ENCODE measurements at regions of chr12 and their contacts with region 1.

Region 1: GRCh38 chr12:81128930-81129554 is 51.2 kb downstream of the ACSS3 start:
- DNase-seq: no peak
- H3K4me3 Mint-ChIP-seq: no peak overlapping the region
- H3K27ac Mint-ChIP-seq: no peak overlapping the region
- H3K4me1 Mint-ChIP-seq: no peaks in the 10 kb centered on the region
- H3K27me3 Mint-ChIP-seq: no peaks in the 10 kb centered on the region

Region 2: GRCh38 chr12:80412369-80412953 is 716.6 kb before region 1 on chr12:
- intact Hi-C with region 1: loop called (anchors 5 kb)
- DNase-seq: no peak
- H3K4me3 Mint-ChIP-seq: no peak overlapping the region
- H3K27ac Mint-ChIP-seq: no peak overlapping the region
- H3K4me1 Mint-ChIP-seq: no peaks in the 10 kb centered on the region
- H3K27me3 Mint-ChIP-seq: no peaks in the 10 kb centered on the region